ENCODE measurements at regions of chr6 and their contacts with region 1.

Region 1: DNA sequence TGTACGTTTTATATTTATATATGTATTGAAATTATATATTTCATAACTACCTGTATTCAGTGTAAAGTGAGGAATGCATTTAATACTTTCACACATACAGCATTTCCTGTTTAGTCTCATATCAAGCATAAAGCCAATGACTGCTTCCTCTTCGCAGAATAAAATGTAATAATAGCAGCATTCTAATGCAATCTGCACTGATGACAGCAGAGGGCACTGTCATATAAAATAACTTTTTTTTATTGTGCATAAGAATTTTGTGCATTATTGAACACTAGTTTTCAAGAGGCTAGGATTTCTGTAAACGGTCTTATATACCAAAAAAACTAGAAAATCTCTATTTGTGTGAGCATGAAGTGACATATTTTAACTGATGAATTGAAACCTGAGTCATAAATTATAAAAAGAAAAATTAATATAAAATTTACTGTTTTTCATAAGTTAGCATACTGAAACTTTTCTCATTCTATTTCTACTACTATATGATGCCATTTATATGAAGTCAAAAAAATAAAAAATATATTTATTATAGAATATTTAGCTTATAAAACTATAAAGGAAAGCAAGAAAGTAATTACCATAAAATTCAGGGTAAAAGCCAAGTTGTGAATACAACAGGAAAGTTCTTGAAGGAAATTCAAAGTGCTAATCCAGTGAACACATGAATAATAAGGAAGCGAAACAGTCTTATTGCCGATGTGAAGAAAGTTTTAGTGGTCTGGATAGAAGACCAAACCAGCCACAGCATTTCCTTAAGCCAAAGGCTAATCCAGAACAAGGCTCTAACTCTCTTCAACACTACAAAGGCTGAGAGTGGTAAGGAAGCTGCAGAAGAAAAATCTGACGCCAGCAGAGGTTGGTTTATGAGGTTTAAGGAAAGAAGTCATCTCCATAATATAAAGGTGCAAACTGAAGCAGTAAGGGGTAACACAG is 36.3 kb downstream of the RNF146 start:
- DNase-seq: no peak
- ATAC-seq: peak; percentile 53

Region 2: DNA sequence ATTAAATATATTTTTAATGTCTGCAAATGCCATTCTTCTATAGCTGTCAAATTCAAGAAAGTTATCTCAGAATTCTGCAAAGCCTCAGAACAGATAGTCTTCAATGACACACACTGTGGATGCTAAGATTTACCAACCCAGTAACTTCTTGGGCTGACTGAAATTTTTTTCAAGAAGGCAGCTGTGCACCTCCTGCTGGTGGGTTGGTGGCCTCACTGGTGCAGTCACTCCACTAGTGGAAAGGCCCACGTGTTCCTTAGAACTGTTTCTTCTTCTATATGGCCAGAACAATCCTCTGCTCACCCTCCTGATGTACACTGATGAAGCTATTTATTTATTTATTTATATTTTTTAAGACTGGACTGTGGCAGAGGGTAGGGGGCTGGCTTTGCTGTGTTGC is 244.2 kb after region 1 on chr6:
- intact Hi-C with region 1: loop called (anchors 10 kb)
- DNase-seq: no peak
- ATAC-seq: no peak